GM10248 (cell line): ENCODE measurements at regions of chr2 and their contacts with region 1.

Region 1: GRCh38 chr2:20446917-20447436 is at the start of gene RHOB:
- DNase-seq: peak; percentile 100
- CTCF ChIP-seq: no peak

Region 2: GRCh38 chr2:20365249-20365817 is 81.6 kb before region 1 on chr2:
- CTCF ChIA-PET with region 1: no interaction called
- POLR2A ChIA-PET with region 1: interaction called, 11 read pairs
- DNase-seq: peak; percentile 72
- CTCF ChIP-seq: no peak

Region 3: DNA sequence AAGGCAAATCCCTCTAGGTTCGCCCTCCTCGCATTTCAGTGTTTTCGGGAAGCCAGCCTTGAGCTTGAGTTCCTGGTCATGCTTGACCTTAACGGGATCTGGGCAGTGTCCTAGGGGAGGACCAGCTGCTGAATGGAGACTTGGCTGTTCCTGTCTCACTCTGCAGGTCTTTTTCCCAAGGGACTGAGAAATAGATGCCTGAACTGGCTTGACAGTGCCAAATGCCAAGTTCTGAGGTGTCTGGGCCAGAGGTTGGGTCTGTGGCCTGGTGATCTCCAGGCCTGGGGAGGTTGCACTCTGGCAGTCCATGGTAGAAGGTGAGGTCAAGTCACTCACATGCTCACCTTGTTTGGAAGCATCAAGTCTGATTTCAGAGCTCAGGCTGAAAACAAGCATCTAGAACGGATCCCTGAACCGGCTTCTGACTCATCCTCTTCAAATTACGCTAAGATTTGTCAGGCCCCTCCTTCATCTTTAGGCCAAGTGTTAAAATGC is 19.5 kb after region 1 on chr2:
- CTCF ChIA-PET with region 1: no interaction called
- POLR2A ChIA-PET with region 1: interaction called, 14 read pairs
- DNase-seq: no peak
- CTCF ChIP-seq: no peak

Region 4: GRCh38 chr2:20496081-20496876 is 49.3 kb after region 1 on chr2:
- CTCF ChIA-PET with region 1: interaction called, 4 read pairs
- POLR2A ChIA-PET with region 1: interaction called, 11 read pairs
- DNase-seq: no peak
- CTCF ChIP-seq: no peak

Region 5: GRCh38 chr2:20562540-20563225 is 115.7 kb after region 1 on chr2:
- CTCF ChIA-PET with region 1: interaction called, 3 read pairs
- POLR2A ChIA-PET with region 1: interaction called, 15 read pairs
- DNase-seq: no peak
- CTCF ChIP-seq: peak; percentile 4

Region 6: GRCh38 chr2:20617892-20618467 is 171.0 kb after region 1 on chr2:
- CTCF ChIA-PET with region 1: interaction called, 3 read pairs
- POLR2A ChIA-PET with region 1: interaction called, 22 read pairs
- DNase-seq: no peak
- CTCF ChIP-seq: no peak

Region 7: GRCh38 chr2:20650880-20651730 is 204.1 kb after region 1 on chr2 and contains the start of gene HS1BP3:
- CTCF ChIA-PET with region 1: interaction called, 86 read pairs
- POLR2A ChIA-PET with region 1: interaction called, 82 read pairs
- DNase-seq: peak; percentile 98
- CTCF ChIP-seq: peak; percentile 99